Ascending aorta (tissue), 2 donors: ENCODE measurements at regions of chr2 and their contacts with region 1.

Region 1: GRCh38 chr2:43219383-43220228 is 6.8 kb downstream of the ZFP36L2 start:
- DNase-seq: peak in 1 of 2 donors; percentile 92
- H3K4me3 ChIP-seq: peak overlapping the region; percentile 81 to 89
- H3K27ac ChIP-seq: peak overlapping the region; percentile 98
- H3K4me1 ChIP-seq: peaks cover 20 to 46% of the 10 kb centered on the region in 2 donors
- H3K27me3 ChIP-seq: no peaks in the 10 kb centered on the region
- CTCF ChIP-seq: no peak

Region 2: DNA sequence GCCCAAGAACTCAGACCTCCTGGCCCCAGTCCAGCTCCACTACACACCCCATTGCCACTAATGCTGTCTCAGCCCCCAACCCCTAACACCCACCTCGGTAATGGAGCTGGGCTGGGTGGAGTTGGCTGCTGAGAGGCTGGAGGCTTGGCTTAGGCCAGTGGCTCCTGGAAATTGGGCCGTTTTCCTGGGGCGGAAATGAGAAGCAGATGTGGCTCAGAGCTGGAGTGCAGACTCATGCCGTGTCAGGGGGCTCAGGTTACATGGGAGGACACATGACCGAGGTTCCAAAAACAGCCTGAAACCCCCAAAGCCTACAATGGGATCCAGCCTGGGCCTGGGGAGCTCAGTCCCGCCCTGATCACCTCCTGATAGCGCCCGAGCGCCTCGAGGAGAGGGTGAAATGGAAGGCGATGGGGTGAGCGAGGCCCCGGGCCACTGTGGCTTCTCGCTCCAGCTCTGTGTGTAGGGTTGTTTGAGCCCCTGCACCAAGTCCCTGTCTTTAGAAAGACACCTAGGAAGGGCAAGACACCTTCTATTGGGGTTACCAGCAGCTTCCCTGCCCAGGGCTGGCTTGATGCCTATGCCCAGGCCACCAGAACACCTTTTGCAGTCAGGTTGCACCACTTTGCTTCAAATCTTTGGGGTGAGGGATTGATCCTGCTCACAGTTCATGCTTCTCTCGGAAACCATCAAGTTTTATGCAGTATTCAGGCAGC is 251.5 kb before region 1 on chr2:
- intact Hi-C with region 1: loop called (anchors 2 kb)
- DNase-seq: peak; percentile 53 to 80
- H3K4me3 ChIP-seq: no peak overlapping the region
- H3K27ac ChIP-seq: peak overlapping the region; percentile 54 to 64
- H3K4me1 ChIP-seq: peaks cover 16 to 35% of the 10 kb centered on the region in 2 donors
- H3K27me3 ChIP-seq: no peaks in the 10 kb centered on the region
- CTCF ChIP-seq: no peak

Region 3: DNA sequence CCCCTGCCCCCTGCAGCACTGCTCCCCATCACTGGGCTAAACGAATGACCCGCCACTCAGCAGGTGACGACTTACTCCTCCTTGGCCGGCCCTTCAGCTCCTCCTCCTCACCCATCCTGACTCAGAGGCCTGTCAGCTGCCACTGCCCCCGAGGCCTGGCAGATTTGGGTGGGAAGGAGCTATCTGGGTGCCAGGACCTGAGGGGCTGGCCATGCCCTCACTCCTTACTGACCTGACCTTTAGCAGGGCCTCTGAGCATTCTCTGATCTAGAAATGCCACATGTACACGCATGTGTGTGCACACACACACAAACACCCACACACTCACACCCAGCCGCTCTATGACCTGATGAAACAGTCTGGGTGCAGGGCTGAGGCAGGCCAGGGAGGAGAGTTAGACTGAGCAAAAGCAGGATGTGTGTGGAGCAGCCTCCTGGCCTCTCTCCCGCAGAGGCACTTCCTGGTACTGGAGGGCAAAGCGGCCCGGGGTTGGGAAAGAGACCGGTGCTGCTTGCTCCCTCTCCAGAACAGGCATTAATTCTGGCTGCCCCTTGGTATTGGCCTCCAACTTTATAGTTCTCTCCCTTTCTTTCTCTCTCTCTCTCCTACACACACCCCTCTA is 61.2 kb before region 1 on chr2:
- intact Hi-C with region 1: loop called (anchors 1 kb)
- DNase-seq: peak; percentile 82 to 94
- H3K4me3 ChIP-seq: peak overlapping the region in 1 of 2 donors; percentile 5
- H3K27ac ChIP-seq: peak overlapping the region; percentile 93 to 95
- H3K4me1 ChIP-seq: peaks cover 22 to 31% of the 10 kb centered on the region in 2 donors
- H3K27me3 ChIP-seq: no peaks in the 10 kb centered on the region
- CTCF ChIP-seq: no peak

Region 4: DNA sequence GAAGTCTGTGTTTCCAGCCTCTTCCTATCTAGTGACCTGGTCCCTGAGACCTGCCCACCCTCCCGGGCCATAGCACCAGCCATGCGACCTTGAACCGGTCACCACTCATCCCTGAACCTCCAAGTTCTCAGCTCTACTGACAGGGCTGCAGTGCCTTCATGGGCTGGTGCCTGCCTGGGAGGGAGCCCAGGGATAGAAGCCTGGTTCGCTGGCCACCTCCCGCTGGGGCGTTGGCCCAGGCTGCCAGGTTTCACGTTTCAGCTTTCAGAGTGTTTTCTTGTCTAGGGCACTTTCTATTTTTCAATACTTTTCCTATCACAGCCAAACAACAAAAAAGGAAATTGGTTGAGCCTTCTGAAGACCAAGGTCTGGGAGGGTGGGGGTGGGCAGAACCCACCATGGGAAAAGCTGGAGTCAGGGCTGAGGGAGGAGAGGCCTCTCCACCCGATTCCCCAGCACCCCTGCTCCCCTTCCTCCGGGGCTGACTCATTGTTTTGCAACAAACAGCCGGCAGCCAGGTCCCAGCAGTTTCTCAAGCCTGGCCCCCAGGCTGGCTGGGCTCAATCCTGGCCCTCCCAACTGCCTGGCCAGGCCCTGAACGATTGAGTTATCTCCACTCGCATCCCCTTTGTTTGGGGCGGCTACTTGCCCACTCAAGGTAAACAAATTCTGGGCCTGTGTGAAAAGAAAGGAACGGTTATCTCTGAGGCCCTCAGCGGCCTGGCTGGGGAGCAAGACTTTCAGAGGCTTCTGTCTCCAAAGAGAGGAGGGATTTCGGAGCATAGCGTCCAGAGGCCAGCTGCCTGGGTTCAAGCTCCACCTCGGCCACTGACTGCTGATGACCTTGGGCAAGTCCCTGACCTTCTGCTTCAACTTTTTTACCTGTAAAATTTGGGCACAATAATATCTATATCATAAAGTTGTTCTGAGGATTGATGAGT is 40.7 kb before region 1 on chr2:
- intact Hi-C with region 1: loop called (anchors 2 kb)
- DNase-seq: peak; percentile 48 to 91
- H3K4me3 ChIP-seq: no peak overlapping the region
- H3K27ac ChIP-seq: peak overlapping the region; percentile 83 to 89
- H3K4me1 ChIP-seq: peaks cover 0 to 16% of the 10 kb centered on the region in 2 donors
- H3K27me3 ChIP-seq: no peaks in the 10 kb centered on the region
- CTCF ChIP-seq: no peak

Region 5: DNA sequence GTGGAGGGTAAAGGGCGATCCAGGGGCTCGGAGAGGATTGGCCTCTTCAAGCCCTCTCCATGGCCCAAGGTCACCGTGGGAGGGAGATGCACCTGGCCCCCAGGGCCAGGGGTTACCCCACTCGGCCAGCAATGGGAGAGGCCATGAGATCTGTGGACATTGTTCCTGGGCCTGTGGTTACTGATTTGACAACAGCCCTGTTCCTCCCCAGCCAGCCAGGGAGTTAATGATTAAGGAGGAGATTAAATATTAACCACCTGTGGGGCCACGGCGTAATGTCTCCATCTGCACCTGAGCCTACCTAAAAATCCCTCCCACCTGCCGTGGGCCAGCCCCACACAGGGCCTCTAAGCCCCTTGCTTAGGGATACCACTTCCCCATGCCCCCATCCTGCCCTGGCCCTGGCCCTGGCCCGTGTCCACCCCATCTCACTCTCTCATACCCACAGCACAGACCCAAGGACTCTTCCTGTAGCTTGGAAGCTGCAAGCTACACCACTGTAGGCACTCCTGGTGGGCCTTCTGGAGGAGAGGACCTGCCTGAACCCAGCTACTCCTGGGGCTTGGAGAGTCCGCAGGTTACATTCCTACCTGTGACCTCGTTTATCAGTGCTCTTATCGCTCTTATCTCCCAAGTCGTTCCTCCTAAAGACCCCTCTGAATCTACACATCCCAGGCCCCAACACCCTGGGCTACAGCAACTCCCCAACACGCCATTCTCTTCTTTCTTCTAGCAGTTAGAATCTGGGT is 25.3 kb before region 1 on chr2:
- intact Hi-C with region 1: no loop called
- DNase-seq: no peak
- H3K4me3 ChIP-seq: no peak overlapping the region
- H3K27ac ChIP-seq: no peak overlapping the region
- H3K4me1 ChIP-seq: no peaks in the 10 kb centered on the region
- H3K27me3 ChIP-seq: no peaks in the 10 kb centered on the region
- CTCF ChIP-seq: no peak